Naive thymus-derived CD4-positive, alpha-beta T cell (primary cell): ENCODE measurements at regions of chr20 and their contacts with region 1.

Region 1: DNA sequence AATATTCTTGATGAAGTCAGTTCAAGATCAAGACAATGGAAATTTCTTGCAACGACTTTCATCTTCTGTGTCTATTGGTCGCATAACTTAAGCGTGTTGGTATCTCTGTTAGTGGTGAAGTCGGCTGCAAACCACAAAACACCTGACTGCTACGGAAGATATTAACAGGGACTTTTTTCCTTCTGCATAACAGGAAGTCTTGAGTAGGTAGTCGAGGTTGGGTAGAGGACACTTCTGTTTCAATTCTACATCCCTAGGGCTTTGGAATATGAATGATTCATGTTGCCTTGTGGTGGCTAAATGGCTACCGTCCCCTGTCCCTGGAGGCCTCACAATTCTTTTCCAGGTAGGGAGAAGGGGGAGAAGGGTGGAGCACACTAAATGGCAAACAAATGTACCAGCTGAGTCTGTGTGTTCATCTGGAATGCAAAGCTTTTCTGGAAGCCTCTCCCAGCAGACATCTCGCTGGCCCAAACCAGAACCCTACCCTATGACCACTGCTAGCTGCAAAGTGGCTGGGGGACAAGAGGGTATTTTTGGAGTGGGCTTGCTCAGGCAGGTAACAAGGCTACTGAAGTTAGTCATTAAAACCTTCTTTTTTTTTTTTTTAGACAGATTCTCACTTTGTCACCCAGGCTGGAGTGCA is 34.6 kb upstream of the NKX2-2 start:
- DNase-seq: peak in 8 of 9 donors; percentile 43 to 86 (median 82)
- ATAC-seq: peak; percentile 91
- H3K4me3 ChIP-seq: peak overlapping the region; percentile 51
- H3K4me3 Mint-ChIP-seq: peak overlapping the region; percentile 60 to 81 (median 75)
- H3K27ac ChIP-seq: peak overlapping the region; percentile 79
- H3K27ac Mint-ChIP-seq: peak overlapping the region; percentile 88 to 97 (median 94)
- H3K4me1 ChIP-seq: peaks cover 4 to 35% of the 10 kb centered on the region in 2 donors
- H3K4me1 Mint-ChIP-seq: peaks cover 10 to 48% (median 37%) of the 10 kb centered on the region in 7 donors
- H3K27me3 ChIP-seq: no peaks in the 10 kb centered on the region
- H3K27me3 Mint-ChIP-seq: peaks cover 0 to 3% (median 0%) of the 10 kb centered on the region in 5 donors

Region 2: DNA sequence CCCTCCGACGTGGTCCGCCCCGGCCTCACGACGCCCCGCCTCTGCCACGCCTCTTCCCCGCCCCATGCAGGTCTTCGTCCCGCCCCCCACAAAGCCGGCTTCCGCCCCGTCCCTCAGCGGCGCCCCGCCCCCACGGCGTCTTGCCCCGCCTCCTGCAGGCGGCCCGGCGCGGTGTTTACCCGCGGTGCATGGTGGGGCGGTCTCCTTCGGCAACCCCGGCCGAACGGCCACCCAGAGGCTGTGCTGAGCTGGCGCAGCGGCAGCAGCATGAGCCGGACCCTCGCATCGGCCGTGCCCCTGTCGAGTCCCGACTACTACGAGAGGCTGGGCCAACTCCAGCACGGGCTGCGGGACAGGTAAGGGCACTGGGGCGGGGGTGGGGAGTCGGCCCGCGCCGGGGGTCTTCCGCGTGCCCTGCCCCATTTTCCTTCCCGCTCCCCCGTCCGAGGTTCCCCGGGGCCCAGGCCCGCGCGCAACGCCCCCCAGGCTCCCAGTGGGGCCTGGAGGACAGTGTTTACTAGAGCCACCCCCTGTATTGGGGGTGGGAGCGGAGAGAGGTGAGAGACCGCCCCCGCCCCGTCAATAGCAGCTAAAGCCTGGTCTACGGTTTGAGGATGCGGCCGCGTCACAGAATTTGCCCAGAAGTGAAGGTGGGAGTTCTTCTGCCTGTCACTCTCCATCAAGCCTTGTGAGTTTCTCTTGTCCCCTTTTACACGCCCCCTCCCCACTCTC is 422.5 kb before region 1 on chr20 and contains the start of gene KIZ:
- CTCF ChIA-PET with region 1: no interaction called
- POLR2A ChIA-PET with region 1: interaction called, 5 read pairs
- intact Hi-C with region 1: loop called in 1 of 2 experiments (anchors 1 kb)
- DNase-seq: peak; percentile 93 to 100 (median 97)
- ATAC-seq: peak; percentile 100
- H3K4me3 ChIP-seq: peak within 1 kb of the TSS; percentile 56
- H3K4me3 Mint-ChIP-seq: peak within 1 kb of the TSS; percentile 86 to 98 (median 90)
- H3K27ac ChIP-seq: peak within 1 kb of the TSS; percentile 77
- H3K27ac Mint-ChIP-seq: peak within 1 kb of the TSS; percentile 70 to 97 (median 88)
- H3K4me1 ChIP-seq: peaks cover 10 to 16% of the 10 kb centered on the region in 2 donors
- H3K4me1 Mint-ChIP-seq: peaks cover 11 to 35% (median 21%) of the 10 kb centered on the region in 7 donors
- H3K27me3 ChIP-seq: no peaks in the 10 kb centered on the region
- H3K27me3 Mint-ChIP-seq: peaks cover 0 to 4% (median 0%) of the 10 kb centered on the region in 5 donors
- total RNA-seq, gene KIZ: 15.6 to 47.4 (median 32.5) TPM

Region 3: DNA sequence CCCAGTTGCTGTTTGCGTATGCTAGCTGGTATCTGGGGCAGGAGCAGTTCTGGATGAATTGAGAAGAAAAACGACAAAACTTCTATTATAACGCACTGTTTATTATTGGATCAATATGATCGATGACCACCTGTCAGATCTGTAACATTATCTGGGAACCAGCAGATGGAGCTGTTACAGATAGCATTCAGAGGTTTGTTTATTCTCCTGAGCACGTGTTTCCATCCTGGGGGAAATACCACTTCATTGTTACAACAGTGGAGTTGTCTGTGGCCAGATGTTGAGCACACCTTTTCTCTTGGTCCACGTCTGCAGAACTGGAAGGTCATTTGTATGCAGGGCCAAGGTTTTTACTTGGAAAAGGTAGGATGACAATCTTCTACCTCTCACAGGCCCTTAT is 18.6 kb before region 1 on chr20:
- CTCF ChIA-PET with region 1: interaction called, 3 read pairs
- POLR2A ChIA-PET with region 1: interaction called, 5 read pairs
- intact Hi-C with region 1: loop called in 1 of 2 experiments (anchors 1 kb)
- DNase-seq: no peak
- ATAC-seq: no peak
- H3K4me3 ChIP-seq: no peak overlapping the region
- H3K4me3 Mint-ChIP-seq: no peak overlapping the region
- H3K27ac ChIP-seq: no peak overlapping the region
- H3K27ac Mint-ChIP-seq: peak overlapping the region in 1 of 9 donors; percentile 3
- H3K4me1 ChIP-seq: no peaks in the 10 kb centered on the region
- H3K4me1 Mint-ChIP-seq: peaks cover 0 to 5% (median 4%) of the 10 kb centered on the region in 7 donors
- H3K27me3 ChIP-seq: no peaks in the 10 kb centered on the region
- H3K27me3 Mint-ChIP-seq: peaks cover 33 to 76% (median 39%) of the 10 kb centered on the region in 5 donors

Region 4: DNA sequence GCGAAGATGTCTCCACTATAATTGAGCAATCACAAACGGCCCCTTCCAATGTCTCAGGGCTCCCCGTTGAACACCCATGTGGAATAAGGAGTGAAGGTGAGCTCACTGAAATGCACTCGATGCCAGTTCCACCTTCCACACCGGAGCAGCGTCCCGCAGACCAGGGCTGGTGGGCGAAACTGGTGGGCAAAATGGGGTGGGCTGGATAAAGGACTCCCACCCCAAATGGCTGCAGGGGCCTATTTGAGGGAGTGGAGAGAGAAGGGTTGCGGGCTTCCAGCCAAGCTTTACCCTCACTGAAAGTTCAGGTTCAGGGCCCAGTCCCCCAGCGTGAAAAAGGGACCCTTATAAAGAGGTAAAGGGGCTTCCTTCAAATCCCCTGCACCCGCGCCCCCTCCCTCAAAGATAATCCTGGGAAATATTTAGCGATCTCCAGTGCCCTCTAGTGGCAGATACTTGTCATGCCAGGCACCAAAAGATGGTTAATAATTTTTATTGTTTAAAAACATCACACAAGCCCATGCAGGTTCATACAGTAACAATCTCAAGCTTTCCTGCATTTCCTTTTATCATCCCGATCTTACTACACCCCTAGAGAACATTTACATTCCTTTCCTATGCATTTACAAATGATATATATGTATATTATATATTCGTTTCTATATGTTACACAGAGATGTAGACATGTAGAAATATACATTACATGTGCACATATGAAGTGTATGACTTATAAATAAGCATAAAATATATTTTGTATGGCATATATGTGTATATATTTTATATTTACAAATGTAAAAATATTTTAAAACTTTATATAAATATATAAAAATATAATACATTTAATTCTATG is 23.6 kb after region 1 on chr20:
- CTCF ChIA-PET with region 1: interaction called, 7 read pairs
- POLR2A ChIA-PET with region 1: interaction called, 14 read pairs
- intact Hi-C with region 1: loop called (anchors 1 to 2 kb)
- DNase-seq: peak in 4 of 9 donors; percentile 18 to 34 (median 29)
- ATAC-seq: peak; percentile 46
- H3K4me3 ChIP-seq: no peak overlapping the region
- H3K4me3 Mint-ChIP-seq: no peak overlapping the region
- H3K27ac ChIP-seq: no peak overlapping the region
- H3K27ac Mint-ChIP-seq: no peak overlapping the region
- H3K4me1 ChIP-seq: peaks cover 0 to 11% of the 10 kb centered on the region in 2 donors
- H3K4me1 Mint-ChIP-seq: peaks cover 0 to 12% (median 6%) of the 10 kb centered on the region in 7 donors
- H3K27me3 ChIP-seq: no peaks in the 10 kb centered on the region
- H3K27me3 Mint-ChIP-seq: peaks cover 16 to 37% (median 29%) of the 10 kb centered on the region in 5 donors

Region 5: DNA sequence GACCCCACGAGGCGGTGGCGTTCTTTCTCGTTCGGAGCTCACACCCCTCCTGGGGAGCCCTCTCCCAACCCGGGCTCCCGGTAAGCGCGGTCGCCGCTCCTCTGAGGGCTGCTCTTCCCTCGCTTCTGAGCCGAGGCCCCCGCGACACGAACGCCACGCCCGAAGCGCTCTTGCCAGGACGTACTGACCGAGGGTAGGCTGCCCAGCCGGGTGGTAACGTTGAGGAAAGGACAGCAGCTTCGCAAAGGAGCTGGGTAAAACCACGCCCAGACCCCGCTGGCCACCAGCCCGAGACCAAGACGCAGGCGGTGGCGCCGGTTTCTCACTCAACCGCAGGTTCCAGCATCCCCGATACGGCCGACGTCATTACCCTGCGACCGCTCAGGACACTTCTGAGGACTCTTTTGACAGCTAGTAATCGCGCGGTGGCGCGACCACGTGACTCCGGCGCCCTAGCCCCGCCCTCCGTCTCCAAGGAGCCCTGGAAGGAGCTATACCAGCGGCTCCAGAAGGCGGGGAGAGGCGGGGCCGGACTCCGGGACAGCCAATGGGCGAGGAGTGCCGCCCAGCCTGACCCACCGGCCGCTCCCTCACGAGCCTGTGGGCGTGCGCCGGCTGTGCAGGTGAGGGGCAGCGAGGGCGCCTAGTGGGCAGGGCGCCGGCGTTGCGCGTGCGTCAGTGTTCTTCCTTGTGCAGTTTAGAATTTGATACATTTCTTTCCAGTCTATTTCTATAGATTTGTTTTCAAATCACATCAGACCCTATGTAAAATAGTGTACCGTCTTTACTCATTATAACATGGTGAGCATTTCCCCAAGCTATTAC is 1809.5 kb after region 1 on chr20:
- CTCF ChIA-PET with region 1: no interaction called
- POLR2A ChIA-PET with region 1: no interaction called
- intact Hi-C with region 1: loop called in 1 of 2 experiments (anchors 2 kb)
- DNase-seq: peak; percentile 97 to 99 (median 98)
- ATAC-seq: peak; percentile 81
- H3K4me3 ChIP-seq: peak overlapping the region; percentile 85
- H3K4me3 Mint-ChIP-seq: peak overlapping the region; percentile 91 to 95 (median 93)
- H3K27ac ChIP-seq: peak overlapping the region; percentile 92
- H3K27ac Mint-ChIP-seq: peak overlapping the region; percentile 94 to 98 (median 97)
- H3K4me1 ChIP-seq: peaks cover 14 to 22% of the 10 kb centered on the region in 2 donors
- H3K4me1 Mint-ChIP-seq: peaks cover 17 to 38% (median 34%) of the 10 kb centered on the region in 7 donors
- H3K27me3 ChIP-seq: no peaks in the 10 kb centered on the region
- H3K27me3 Mint-ChIP-seq: peaks cover 0 to 4% (median 0%) of the 10 kb centered on the region in 5 donors